Transverse colon (tissue), 4 donors: ENCODE measurements at regions of chr21 and their contacts with region 1.

Region 1: DNA sequence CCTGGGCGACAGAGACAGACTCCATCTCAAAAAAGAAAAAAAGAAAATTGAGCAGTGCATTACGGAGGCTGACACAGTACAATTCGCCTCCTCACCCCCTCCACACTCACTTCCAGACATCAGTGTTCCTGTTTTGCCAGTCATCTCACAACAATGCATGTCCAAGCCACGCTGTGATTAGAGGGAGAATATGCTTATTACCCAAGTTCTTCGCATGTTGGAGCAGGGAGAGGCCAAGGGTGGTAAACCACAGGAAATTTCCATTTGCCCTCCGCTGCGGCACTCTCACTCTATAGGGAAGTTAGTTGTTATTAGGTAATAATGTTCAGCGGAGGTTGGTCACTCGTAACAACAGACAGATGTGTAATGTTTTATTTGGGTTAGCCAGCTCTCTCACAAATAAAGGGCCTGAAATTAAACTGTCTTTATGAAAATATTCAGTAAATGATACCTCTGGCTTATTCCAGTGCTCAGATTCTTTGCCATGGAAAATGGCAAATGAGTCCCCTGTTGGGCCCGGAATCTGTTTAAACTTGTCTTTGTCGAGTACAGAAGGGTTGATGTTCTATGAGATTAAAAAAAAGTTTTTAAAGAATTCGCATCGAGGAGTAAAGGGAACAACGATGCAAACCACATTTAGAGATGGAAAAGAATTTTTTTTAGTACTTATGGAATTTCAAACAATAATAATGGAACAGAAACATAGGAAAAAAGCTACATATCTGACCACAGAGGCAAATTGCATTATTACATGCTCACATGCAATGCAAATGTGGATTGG is 33.1 kb downstream of the KCNJ15 start:
- DNase-seq: peak; percentile 16
- H3K4me3 ChIP-seq: no peak overlapping the region
- H3K27ac ChIP-seq: no peak overlapping the region
- H3K4me1 ChIP-seq: peaks cover 0 to 15% (median 4%) of the 10 kb centered on the region in 4 donors
- H3K27me3 ChIP-seq: no peaks in the 10 kb centered on the region
- CTCF ChIP-seq: no peak
- EP300 ChIP-seq: no peak
- POLR2A ChIP-seq: no peak

Region 2: DNA sequence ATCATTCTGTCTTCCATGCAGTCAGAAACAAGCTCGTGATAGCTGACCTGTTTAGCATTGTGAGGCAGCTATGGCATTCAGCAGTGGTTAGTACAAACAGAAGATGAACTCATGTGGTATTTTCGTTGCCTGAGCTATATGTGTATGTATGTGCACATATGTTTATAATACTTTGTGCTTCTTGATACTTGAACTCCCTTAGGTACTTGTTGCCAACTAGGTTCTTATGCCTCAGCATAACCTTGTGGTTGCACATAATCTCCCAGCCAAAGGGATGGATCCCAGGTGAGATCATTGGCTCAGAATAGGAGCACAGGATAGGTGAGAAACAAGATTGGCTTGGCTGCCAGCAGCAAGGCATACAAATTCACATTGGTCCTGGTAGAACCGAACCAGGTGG is 1108.8 kb before region 1 on chr21:
- in situ Hi-C with region 1: no loop called
- intact Hi-C with region 1: loop called (anchors 5 kb)
- DNase-seq: no peak
- H3K4me3 ChIP-seq: no peak overlapping the region
- H3K27ac ChIP-seq: no peak overlapping the region
- H3K4me1 ChIP-seq: no peaks in the 10 kb centered on the region
- H3K27me3 ChIP-seq: no peaks in the 10 kb centered on the region
- CTCF ChIP-seq: no peak
- EP300 ChIP-seq: no peak
- POLR2A ChIP-seq: no peak